HepG2 (cell line): ENCODE measurements at regions of chr1 and their contacts with region 1.

Region 1: GRCh38 chr1:245156081-245156735 is 1.4 kb downstream of the KIF26B start:
- DNase-seq: peak; percentile 50
- ATAC-seq: peak; percentile 89
- H3K4me3 ChIP-seq: peak overlapping the region; percentile 54 to 73 (median 57)
- H3K27ac ChIP-seq: no peak overlapping the region
- H3K4me1 ChIP-seq: peaks cover 40% of the 10 kb centered on the region
- H3K27me3 ChIP-seq: peaks cover 14 to 60% of the 10 kb centered on the region in 2 experiments
- CTCF ChIP-seq: peak; percentile 83
- EP300 ChIP-seq: no peak
- POLR2A ChIP-seq: no peak
- RAD21 ChIP-seq: peak; percentile 91

Region 2: GRCh38 chr1:245258271-245258920 is 102.2 kb after region 1 on chr1:
- CTCF ChIA-PET with region 1: no interaction called
- POLR2A ChIA-PET with region 1: no interaction called
- in situ Hi-C with region 1: no loop called
- intact Hi-C with region 1: loop called (anchors 5 kb)
- DNase-seq: peak; percentile 86
- ATAC-seq: peak; percentile 97
- H3K4me3 ChIP-seq: peak overlapping the region in 2 of 3 experiments; percentile 5 to 36; a peak in 1 of 6 replicates
- H3K27ac ChIP-seq: no peak overlapping the region
- H3K4me1 ChIP-seq: peaks cover 23% of the 10 kb centered on the region
- H3K27me3 ChIP-seq: peaks cover 0 to 16% of the 10 kb centered on the region in 2 experiments; a peak in 2 of 5 replicates
- CTCF ChIP-seq: no peak
- EP300 ChIP-seq: peak in 1 of 2 experiments; percentile 73; a peak in 1 of 4 replicates
- POLR2A ChIP-seq: no peak
- RAD21 ChIP-seq: no peak

Region 3: GRCh38 chr1:245380790-245381535 is 224.8 kb after region 1 on chr1:
- CTCF ChIA-PET with region 1: interaction called, 12 read pairs
- POLR2A ChIA-PET with region 1: no interaction called
- in situ Hi-C with region 1: loop called (anchors 5 kb)
- intact Hi-C with region 1: loop called (anchors 1 kb)
- DNase-seq: no peak
- ATAC-seq: peak; percentile 43; the same call in 1 of the 3 replicates
- H3K4me3 ChIP-seq: no peak overlapping the region
- H3K27ac ChIP-seq: no peak overlapping the region
- H3K4me1 ChIP-seq: peaks cover 15% of the 10 kb centered on the region
- H3K27me3 ChIP-seq: no peaks in the 10 kb centered on the region; a peak in 1 of 5 replicates
- CTCF ChIP-seq: peak; percentile 41
- EP300 ChIP-seq: no peak
- POLR2A ChIP-seq: no peak
- RAD21 ChIP-seq: no peak

Region 4: DNA sequence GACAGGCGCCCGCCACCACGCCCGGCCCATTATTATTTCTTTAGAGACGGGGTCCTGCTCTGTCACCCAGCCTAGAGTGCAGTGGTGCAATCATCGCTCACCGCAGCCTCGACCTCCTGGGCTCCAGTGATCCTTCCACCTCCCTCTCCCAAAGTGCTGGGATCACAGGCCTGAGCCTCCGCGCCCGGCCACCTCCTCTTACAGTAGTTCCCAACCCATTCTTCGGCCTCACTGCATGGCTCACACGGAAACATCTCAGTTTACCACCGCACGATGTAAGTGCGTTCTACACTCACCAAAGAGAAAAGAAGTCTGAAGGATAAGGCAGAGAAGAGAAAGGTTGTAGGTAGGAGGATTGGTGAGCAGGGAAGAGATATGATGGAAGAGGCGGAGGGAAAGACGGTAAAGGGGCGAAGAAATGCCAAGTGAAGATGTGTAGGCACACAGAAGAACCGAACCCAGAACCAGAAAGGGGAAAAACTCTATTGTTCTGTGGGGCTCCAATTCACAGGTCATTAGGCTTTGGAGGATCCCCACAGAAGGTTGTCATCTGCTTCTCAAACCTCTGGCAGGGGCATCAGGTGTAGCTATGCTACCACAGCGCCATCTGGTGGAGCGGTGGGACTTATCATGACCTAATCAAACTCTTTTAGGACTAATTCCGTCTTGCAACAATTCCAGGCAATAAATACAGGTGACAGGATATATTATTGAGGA is 846.7 kb after region 1 on chr1:
- CTCF ChIA-PET with region 1: interaction called, 9 read pairs
- POLR2A ChIA-PET with region 1: no interaction called
- in situ Hi-C with region 1: loop called (anchors 5 kb)
- intact Hi-C with region 1: loop called (anchors 1 kb)
- DNase-seq: peak; percentile 67
- ATAC-seq: peak; percentile 89
- H3K4me3 ChIP-seq: no peak overlapping the region
- H3K27ac ChIP-seq: no peak overlapping the region
- H3K4me1 ChIP-seq: no peaks in the 10 kb centered on the region
- H3K27me3 ChIP-seq: no peaks in the 10 kb centered on the region
- CTCF ChIP-seq: peak; percentile 91
- EP300 ChIP-seq: no peak
- POLR2A ChIP-seq: no peak
- RAD21 ChIP-seq: peak; percentile 85

Region 5: DNA sequence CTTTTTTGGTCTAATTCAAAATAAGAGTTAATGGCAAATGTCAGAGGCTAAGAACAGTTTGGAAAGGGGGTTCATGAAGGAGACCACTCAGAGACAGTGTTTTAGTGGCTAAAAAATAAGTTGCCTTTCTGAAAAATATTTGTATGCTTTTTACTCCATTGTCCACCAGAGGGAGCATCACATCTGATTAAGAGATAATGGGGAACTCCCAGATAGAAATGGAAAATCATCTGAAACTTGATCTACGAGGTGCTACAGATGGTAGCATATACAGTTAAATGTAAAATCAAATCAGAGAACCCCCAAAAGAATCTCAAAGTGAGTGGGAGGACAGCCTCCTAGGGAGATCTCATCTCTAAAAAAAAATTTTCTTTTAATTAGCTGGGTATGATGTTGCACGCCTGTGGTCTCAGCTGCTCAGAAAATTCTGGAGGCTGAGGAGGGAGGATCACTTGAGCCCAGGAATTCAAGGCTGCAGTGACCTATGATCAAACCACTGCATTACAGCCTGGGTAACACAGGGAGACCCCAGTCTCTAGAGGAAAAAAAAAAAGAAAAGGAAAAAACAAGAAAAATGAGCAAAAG is 1341.2 kb after region 1 on chr1:
- CTCF ChIA-PET with region 1: interaction called, 4 read pairs
- POLR2A ChIA-PET with region 1: no interaction called
- in situ Hi-C with region 1: loop called (anchors 25 kb)
- intact Hi-C with region 1: loop called (anchors 1 kb)
- DNase-seq: peak; percentile 72
- ATAC-seq: peak; percentile 23; the same call in 1 of the 3 replicates
- H3K4me3 ChIP-seq: no peak overlapping the region
- H3K27ac ChIP-seq: no peak overlapping the region
- H3K4me1 ChIP-seq: no peaks in the 10 kb centered on the region
- H3K27me3 ChIP-seq: no peaks in the 10 kb centered on the region
- CTCF ChIP-seq: peak; percentile 65
- EP300 ChIP-seq: no peak
- POLR2A ChIP-seq: no peak
- RAD21 ChIP-seq: 0 out of 2 replicates have a peak, but pooled peaks have one; percentile 26